Mammary epithelial cell (primary cell): ENCODE measurements at regions of chr14 and their contacts with region 1.

Region 1: DNA sequence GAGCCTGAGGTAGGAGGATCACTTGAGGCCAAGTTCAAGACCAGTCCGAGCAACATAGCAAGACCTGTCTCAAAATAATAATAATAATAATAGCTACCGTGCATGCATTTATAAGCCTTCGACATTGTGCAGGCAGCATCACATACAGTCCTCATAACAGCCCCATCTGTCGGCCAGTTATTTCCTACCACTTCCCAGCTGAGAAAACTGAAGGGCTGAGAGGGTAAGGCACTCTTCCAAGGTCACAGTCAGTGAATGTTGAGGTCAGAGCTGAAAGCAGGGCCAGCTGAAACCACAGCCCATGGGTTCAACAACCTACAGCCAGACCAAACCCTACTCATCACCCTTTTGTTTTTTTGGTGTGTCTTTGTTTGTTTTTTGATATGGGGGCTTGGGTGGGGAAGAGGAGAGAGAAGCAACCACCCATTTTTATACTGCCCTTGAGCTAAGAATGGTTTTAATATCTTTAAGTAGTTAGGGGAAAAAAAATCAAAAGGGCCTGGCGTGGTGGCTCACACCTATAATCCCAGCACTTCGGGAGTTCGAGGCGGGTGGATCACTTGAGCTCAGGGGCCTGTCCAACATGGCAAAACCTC is 16.8 kb upstream of the ITPK1 start:
- DNase-seq: no peak
- H3K4me3 ChIP-seq: no peak overlapping the region
- H3K27ac ChIP-seq: no peak overlapping the region
- H3K4me1 ChIP-seq: peaks cover 6% of the 10 kb centered on the region
- H3K27me3 ChIP-seq: no peaks in the 10 kb centered on the region
- CTCF ChIP-seq: no peak

Region 2: DNA sequence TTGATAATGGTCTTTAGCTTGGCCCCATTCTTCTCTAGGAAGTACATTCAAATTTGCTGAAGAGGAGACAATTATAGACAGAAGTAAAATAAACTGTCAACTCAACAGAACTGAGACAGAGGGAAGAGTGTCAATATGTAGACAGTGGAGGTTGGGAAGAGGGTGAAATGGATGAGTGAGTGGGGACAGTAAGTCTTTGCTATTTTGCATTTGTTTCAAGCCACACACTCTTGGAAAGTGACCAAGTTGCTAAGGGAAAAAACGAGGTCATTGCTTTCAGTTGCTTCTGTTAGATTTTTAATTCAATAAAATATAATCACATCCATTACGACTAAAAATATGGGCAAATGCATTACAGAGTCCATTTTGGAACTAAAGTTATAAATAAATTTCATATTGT is 152.5 kb after region 1 on chr14:
- CTCF ChIA-PET with region 1: interaction called, 23 read pairs
- dilution Hi-C with region 1: no loop called
- in situ Hi-C with region 1: no loop called
- intact Hi-C with region 1: no loop called
- DNase-seq: no peak
- H3K4me3 ChIP-seq: no peak overlapping the region
- H3K27ac ChIP-seq: no peak overlapping the region
- H3K4me1 ChIP-seq: no peaks in the 10 kb centered on the region
- H3K27me3 ChIP-seq: no peaks in the 10 kb centered on the region
- CTCF ChIP-seq: no peak